Activated naive CD8-positive, alpha-beta T cell treated with anti-CD3 and anti-CD28 coated beads, Interleukin-2, amount 10 ng/mL, durations not matched to agents 7 days and 5 days (primary cell): ENCODE measurements at regions of chr10 and their contacts with region 1.

Region 1: GRCh38 chr10:72285972-72286521 is 12.3 kb downstream of the DDIT4 start:
- DNase-seq: no peak
- ATAC-seq: no peak
- H3K4me3 Mint-ChIP-seq: no peak overlapping the region
- H3K27ac Mint-ChIP-seq: peak overlapping the region; percentile 67
- H3K4me1 Mint-ChIP-seq: peaks cover 29% of the 10 kb centered on the region
- H3K27me3 Mint-ChIP-seq: no peaks in the 10 kb centered on the region

Region 2: GRCh38 chr10:72297968-72298773 is 12.1 kb after region 1 on chr10:
- POLR2A ChIA-PET with region 1: interaction called, 11 read pairs
- DNase-seq: peak; percentile 89
- ATAC-seq: peak; percentile 76
- H3K4me3 Mint-ChIP-seq: peak overlapping the region; percentile 80
- H3K27ac Mint-ChIP-seq: peak overlapping the region; percentile 95
- H3K4me1 Mint-ChIP-seq: peaks cover 52% of the 10 kb centered on the region
- H3K27me3 Mint-ChIP-seq: no peaks in the 10 kb centered on the region